Activated CD4-positive, alpha-beta T cell treated with anti-CD3 and anti-CD28 coated beads for 36 hours (primary cell): ENCODE measurements at regions of chr10 and their contacts with region 1.

Region 1: GRCh38 chr10:24920907-24921881 is 31.2 kb downstream of the PRTFDC1 start:
- DNase-seq: peak; percentile 85
- ATAC-seq: peak; percentile 87
- H3K4me3 Mint-ChIP-seq: no peak overlapping the region
- H3K27ac Mint-ChIP-seq: peak overlapping the region; percentile 63
- H3K4me1 Mint-ChIP-seq: peaks cover 19% of the 10 kb centered on the region
- H3K27me3 Mint-ChIP-seq: no peaks in the 10 kb centered on the region

Region 2: DNA sequence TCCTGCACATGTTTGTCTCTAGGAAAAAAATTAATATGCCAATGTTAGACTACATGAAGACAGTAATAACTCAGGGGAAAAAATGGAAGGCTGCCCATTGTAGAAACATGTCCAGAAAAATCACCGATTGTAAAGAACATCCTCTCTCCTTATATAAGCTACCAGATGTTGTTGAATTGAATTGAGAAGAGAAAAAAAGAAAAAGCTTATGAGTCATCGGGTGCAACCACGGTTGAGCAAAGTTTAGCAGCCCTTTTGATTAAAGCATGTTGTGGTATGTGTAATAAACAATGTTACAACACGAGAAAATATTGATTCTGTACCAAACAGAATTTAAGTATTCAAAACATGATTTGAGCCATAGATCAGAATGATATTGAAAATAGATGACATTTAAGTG is 95.2 kb before region 1 on chr10:
- CTCF ChIA-PET with region 1: no interaction called
- POLR2A ChIA-PET with region 1: no interaction called
- intact Hi-C with region 1: loop called in 1 of 2 experiments (anchors 1 kb)
- DNase-seq: no peak
- ATAC-seq: no peak
- H3K4me3 Mint-ChIP-seq: peak overlapping the region; percentile 29
- H3K27ac Mint-ChIP-seq: no peak overlapping the region
- H3K4me1 Mint-ChIP-seq: peaks cover 41% of the 10 kb centered on the region
- H3K27me3 Mint-ChIP-seq: no peaks in the 10 kb centered on the region

Region 3: DNA sequence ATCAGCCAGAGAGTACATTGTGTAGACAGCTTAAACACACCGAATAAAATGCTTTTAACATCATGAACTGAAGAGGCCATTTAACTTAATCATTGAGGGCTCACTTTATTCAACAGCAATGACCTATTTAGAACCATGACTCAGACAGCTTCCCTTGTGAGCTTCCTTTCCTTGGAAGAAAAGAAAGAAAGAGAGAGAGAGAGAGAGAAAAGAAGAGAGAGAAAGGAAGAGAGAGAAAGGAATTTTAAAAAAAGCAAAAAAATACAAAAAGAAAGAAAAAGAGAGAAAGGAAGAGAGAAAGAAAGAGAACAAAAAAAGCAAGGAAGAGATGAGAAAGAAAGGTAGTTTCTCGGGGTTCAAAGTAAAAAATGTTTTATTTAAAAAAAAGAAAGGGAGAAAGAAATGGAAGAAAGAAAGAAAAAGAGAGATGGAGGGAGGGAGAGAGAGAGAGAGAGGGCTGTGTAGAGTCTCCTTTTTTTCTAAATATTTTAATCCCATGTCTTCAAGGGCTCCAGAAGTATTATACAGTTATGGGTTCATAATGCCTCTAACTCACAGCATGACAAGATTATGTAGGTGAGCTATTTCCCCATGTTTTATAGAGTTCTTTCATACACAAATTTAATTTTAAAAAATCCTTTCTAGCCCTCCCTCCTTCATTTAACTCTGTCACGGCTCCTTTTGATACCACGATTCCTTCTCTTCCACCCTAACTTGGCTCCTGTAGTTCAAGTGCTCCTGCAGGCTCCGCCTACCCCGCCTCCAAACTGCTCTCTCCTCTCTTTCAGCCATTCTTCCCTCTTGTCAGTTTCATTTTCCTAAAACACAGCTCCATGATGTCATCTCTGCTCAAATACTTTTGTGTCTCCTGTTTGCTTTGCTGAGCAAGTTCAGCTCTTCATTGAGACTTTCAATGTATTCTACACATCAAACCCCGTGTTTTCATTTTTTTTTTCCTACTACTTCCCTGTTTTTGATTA is 54.3 kb before region 1 on chr10:
- CTCF ChIA-PET with region 1: no interaction called
- POLR2A ChIA-PET with region 1: no interaction called
- intact Hi-C with region 1: loop called in 1 of 2 experiments (anchors 1 kb)
- DNase-seq: peak; percentile 19
- ATAC-seq: peak; percentile 27
- H3K4me3 Mint-ChIP-seq: no peak overlapping the region
- H3K27ac Mint-ChIP-seq: no peak overlapping the region
- H3K4me1 Mint-ChIP-seq: peaks cover 29% of the 10 kb centered on the region
- H3K27me3 Mint-ChIP-seq: no peaks in the 10 kb centered on the region

Region 4: DNA sequence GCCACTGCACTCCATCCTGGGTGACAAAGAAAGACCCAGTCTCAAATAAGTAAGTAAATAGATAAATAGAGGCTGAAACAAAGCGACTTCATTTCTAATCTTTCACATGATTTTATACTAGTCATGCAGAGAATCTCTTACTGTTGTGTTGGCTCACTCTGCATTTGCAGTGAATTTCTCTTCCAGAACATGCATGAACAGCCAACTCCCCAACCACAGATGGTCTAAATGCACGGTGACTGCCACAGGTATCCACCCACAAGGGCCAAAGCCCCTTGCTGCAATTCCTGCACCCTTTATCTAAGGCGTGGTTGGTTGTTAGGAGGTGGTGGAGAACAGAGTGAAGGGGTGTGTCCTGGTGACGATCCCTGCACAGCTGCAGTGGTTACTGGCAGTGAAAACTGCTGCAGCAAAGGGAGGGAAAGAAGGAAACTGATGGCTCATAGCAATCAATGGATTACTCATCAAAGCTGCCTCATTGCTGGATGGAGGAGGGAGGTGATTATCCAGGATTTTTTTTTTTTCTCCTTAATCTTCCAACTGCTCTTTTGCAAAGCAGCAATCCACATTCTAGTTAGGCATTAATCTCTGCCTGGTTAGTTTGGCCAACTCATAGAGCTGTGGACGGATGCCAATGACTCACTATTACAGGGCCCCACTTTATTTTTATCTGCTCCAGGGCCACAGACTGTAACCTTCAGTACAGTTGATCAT is 19.4 kb before region 1 on chr10:
- CTCF ChIA-PET with region 1: interaction called, 3 read pairs
- POLR2A ChIA-PET with region 1: no interaction called
- intact Hi-C with region 1: loop called (anchors 1 kb)
- DNase-seq: peak; percentile 36
- ATAC-seq: peak; percentile 21
- H3K4me3 Mint-ChIP-seq: no peak overlapping the region
- H3K27ac Mint-ChIP-seq: no peak overlapping the region
- H3K4me1 Mint-ChIP-seq: peaks cover 38% of the 10 kb centered on the region
- H3K27me3 Mint-ChIP-seq: no peaks in the 10 kb centered on the region

Region 5: DNA sequence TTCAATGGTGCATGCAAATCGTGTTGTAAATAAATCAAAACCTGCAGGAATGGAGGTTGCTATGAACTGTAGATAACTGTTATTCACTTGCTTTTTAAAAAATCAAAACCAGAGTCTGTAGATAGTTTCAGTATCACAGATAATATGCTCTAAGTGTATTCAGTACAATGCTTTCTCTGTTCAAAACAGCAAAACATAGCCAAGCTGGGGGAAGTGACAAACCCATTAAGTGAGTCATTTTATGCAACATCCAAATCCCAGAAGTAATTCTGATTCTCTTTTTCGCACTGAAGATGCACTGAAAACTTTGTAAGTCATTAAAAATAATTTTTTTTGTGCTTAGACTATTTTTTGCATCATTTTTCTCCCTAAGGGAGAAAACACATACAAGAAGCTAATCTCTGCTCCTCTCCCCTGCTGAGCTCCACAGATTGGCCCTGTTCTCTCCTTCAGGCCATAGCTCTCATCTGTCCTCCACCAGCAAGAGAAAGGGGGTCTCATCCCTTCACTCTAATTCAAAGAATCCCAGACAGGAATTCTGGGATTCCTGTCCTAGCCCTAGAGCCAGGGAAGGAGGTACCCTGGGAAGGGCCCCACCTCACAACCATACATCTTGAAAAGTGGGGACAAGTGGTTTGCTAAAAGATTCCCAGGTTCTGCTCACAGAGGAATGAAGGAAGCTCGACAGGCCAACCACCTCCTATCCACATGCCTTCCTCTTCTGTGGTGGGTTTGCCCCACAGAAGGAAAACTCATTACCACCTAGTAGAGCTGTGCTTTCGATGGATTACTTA is 26.3 kb after region 1 on chr10:
- CTCF ChIA-PET with region 1: interaction called, 5 read pairs
- POLR2A ChIA-PET with region 1: no interaction called
- intact Hi-C with region 1: loop called (anchors 2 kb)
- DNase-seq: no peak
- ATAC-seq: peak; percentile 85
- H3K4me3 Mint-ChIP-seq: no peak overlapping the region
- H3K27ac Mint-ChIP-seq: no peak overlapping the region
- H3K4me1 Mint-ChIP-seq: peaks cover 18% of the 10 kb centered on the region
- H3K27me3 Mint-ChIP-seq: peaks cover 4% of the 10 kb centered on the region

Region 6: DNA sequence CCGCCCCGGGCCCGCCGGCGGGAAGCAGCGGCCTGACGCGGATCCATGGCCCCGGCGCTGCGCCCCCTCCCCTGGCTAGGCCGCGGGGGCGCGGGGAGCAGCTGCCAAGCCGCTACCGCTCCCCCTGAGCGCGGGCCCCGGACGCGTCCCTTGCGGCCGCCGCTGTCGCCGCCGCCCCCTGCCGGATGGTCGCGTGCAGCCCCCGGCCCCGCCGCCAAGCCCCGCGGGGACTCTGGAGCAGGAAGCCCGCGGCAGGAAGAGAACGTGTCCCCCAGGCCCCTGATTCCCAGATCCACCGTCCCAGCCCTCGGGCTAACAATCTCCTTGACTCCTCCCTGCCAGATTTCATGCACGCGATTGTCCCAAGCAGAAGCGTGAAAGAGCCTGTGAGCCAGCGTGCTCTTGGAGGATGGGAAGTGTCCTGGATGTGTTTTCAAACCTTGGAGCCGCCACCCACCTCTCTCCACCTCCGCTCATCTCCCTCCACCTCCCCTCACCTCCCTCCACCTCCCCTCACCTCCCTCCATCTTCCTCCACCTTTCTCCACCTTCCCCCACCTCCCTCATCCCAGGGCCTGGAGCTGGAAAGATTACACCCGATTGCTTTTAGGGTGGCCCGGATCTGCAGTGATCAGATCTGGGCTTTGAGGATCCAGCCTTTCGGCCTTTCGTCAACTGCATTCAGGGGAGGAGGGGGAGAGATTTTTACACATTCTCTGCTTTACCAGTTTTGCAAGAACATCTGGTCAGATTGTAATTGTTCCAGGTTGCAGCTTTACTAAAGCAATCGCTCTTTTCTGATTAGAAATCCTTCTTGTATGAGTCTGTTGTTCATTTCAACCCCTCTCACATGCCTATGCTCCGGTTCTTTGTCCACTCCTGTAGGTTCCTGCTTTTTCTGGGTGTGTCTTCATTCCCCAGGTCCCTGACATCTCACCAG is 31.8 kb after region 1 on chr10:
- CTCF ChIA-PET with region 1: no interaction called
- POLR2A ChIA-PET with region 1: no interaction called
- intact Hi-C with region 1: loop called in 1 of 2 experiments (anchors 2 kb)
- DNase-seq: peak; percentile 59
- ATAC-seq: peak; percentile 69
- H3K4me3 Mint-ChIP-seq: peak overlapping the region; percentile 67
- H3K27ac Mint-ChIP-seq: no peak overlapping the region
- H3K4me1 Mint-ChIP-seq: peaks cover 17% of the 10 kb centered on the region
- H3K27me3 Mint-ChIP-seq: peaks cover 4% of the 10 kb centered on the region

Region 7: GRCh38 chr10:25016376-25017154 is 95.4 kb after region 1 on chr10 and contains the start of gene THNSL1:
- CTCF ChIA-PET with region 1: no interaction called
- POLR2A ChIA-PET with region 1: no interaction called
- intact Hi-C with region 1: loop called (anchors 1 to 10 kb)
- DNase-seq: peak; percentile 98
- ATAC-seq: peak; percentile 99
- H3K4me3 Mint-ChIP-seq: peak within 1 kb of the TSS; percentile 85
- H3K27ac Mint-ChIP-seq: peak within 1 kb of the TSS; percentile 98
- H3K4me1 Mint-ChIP-seq: peaks cover 23% of the 10 kb centered on the region
- H3K27me3 Mint-ChIP-seq: no peaks in the 10 kb centered on the region
- total RNA-seq, gene THNSL1: 8.0 to 9.5 TPM